GM18951 (cell line): ENCODE measurements at regions of chr20 and their contacts with region 1.

Region 1: GRCh38 chr20:29326376-29327070 is 1930.9 kb upstream of the DEFB115 start:
- POLR2A ChIP-seq: no peak

Region 2: DNA sequence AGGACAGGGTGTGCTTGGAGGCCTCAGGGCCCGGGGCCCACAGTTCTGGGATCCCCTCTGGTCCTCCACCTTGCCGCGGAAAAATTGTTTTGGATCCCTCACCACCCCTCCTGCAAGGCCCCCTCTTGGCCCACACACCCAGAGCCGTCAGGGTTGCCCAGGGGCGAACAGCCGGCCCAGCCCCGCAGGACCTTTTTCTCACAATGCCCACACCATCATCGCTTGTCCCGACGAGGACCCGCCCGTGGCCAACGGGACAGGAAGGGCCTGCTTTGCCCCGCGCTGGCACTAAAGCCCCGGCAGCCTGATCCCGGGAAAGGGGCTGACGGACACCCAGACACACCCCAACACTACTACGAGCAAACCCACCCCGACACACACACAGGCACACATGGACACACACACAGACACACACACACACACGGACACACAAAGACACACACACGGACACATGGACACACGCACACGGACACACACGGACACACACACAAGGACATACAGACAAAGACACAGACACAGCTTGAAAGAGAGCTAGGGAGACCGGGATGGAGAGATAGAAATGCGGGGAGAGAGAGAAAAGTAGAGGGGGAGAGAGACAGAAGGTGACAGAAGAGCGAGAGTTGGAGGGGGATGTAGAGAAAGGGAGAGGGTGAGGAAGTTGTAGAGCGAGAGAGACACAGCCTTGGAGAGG is 437.4 kb after region 1 on chr20:
- in situ Hi-C with region 1: loop called (anchors 10 kb)
- POLR2A ChIP-seq: no peak